ENCODE measurements at regions of chr6 and their contacts with region 1.

Region 1: DNA sequence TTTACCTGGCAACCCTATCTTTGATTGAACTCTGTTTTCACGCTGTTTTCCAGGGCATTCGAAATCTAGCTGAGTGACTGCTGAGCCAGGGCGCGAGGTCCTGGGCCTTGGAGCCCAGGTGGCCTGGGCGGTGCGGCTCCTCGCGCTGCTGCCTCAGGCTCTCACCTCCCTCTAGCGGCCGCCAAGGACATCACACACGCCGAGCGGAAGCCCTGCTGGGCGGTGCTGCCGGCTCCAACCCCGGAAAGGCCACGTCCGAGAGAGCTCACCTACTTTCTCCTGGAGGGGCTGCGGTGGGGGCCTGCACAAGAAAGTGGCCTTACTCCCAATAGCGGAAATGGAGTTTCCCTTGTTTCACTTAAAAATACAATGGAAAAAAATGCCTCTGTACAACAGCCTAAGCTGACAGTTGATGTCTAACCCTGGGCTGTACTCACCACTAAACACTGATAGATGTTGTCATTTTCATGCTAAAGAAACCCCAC is 77.7 kb downstream of the ELOVL4 start:
- DNase-seq: peak; percentile 57 to 79 (median 71)
- ATAC-seq: peak; percentile 98
- H3K4me3 ChIP-seq: no peak overlapping the region
- H3K4me3 Mint-ChIP-seq: peak overlapping the region; percentile 40 to 77 (median 68)
- H3K27ac ChIP-seq: no peak overlapping the region
- H3K27ac Mint-ChIP-seq: peak overlapping the region in 3 of 9 donors; percentile 53 to 56 (median 56)
- H3K4me1 ChIP-seq: no peaks in the 10 kb centered on the region
- H3K4me1 Mint-ChIP-seq: peaks cover 7 to 20% (median 10%) of the 10 kb centered on the region in 7 donors
- H3K27me3 ChIP-seq: no peaks in the 10 kb centered on the region
- H3K27me3 Mint-ChIP-seq: peaks cover 4 to 19% (median 4%) of the 10 kb centered on the region in 5 donors

Region 2: DNA sequence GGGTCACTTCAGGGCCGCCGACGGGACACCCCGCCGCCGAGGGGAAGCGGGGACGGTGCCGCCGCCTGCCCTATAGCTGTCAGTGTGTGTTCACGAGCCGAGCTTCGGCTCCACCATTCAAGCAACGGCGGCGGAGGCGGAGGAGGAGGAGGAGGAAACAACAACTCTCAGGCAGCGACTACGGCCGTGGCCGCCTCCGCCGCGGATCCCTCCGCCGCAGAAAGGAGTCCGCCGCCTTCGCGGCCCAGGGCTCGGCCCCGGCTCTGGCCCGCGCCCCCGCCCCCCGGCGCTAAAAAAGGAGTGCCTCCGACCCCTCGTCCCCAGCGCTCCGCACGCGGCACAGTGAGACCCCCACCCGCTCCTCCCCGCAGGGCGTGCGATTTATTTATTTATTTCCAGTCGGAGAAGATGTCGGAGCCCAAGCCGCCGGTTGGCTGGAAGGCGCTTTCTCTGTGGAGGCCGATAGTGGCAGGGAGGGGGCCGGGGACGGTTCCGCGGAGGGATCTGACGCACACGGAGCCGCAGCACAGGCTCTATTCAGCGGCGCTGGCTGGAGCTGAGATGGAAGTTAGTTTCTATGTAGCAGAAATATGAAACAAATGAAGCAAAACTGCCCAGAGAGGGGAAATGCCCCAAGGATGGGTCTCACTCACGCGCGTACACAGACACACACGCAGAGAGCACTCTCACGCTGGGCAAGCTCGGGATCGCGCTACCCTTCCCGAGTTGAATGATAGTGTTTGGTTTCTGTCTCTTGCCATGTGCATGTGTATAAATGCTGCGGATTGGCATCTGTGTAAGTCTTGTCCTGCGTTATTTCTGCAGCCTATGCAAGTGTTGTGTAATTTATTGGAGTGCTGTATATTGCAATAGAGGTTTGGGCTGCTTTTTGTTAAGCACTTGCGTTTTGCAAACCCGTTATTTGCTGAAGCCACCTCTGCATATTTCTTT is 791.3 kb before region 1 on chr6 and contains the start of gene PHIP:
- CTCF ChIA-PET with region 1: no interaction called
- POLR2A ChIA-PET with region 1: no interaction called
- intact Hi-C with region 1: loop called (anchors 1 to 5 kb)
- DNase-seq: peak; percentile 89 to 97 (median 94)
- ATAC-seq: peak; percentile 90
- H3K4me3 ChIP-seq: peak within 1 kb of the TSS; percentile 83
- H3K4me3 Mint-ChIP-seq: peak within 1 kb of the TSS; percentile 92 to 98 (median 94)
- H3K27ac ChIP-seq: peak within 1 kb of the TSS; percentile 98
- H3K27ac Mint-ChIP-seq: peak within 1 kb of the TSS; percentile 93 to 98 (median 95)
- H3K4me1 ChIP-seq: peaks cover 19 to 21% of the 10 kb centered on the region in 2 donors
- H3K4me1 Mint-ChIP-seq: peaks cover 19 to 46% (median 41%) of the 10 kb centered on the region in 7 donors
- H3K27me3 ChIP-seq: no peaks in the 10 kb centered on the region
- H3K27me3 Mint-ChIP-seq: peaks cover 4 to 23% (median 15%) of the 10 kb centered on the region in 5 donors
- total RNA-seq, gene PHIP: 34.0 to 46.8 (median 41.6) TPM

Region 3: DNA sequence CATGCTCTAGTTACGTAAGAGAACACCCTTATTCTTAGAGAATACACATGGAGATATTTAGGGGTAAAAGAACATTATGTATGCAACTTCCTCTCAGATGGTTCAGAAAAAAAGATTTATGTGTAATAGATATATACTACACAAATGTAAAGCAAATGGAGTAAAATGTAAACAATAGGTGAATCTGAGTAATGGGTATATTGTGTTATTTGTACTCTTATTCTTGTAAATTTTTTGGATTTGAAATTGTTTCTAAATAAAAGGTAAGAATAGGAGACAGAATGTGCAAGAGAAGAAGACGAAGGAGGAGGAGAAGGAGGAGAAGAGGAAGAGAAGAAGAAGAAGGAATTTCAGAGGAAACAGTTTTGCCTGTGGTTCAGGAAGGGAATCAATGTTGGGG is 309.9 kb before region 1 on chr6:
- CTCF ChIA-PET with region 1: no interaction called
- POLR2A ChIA-PET with region 1: no interaction called
- intact Hi-C with region 1: no loop called
- DNase-seq: no peak
- ATAC-seq: no peak
- H3K4me3 ChIP-seq: no peak overlapping the region
- H3K4me3 Mint-ChIP-seq: no peak overlapping the region
- H3K27ac ChIP-seq: no peak overlapping the region
- H3K27ac Mint-ChIP-seq: peak overlapping the region in 1 of 9 donors; percentile 6
- H3K4me1 ChIP-seq: no peaks in the 10 kb centered on the region
- H3K4me1 Mint-ChIP-seq: no peaks in the 10 kb centered on the region
- H3K27me3 ChIP-seq: no peaks in the 10 kb centered on the region
- H3K27me3 Mint-ChIP-seq: peaks cover 0 to 2% (median 0%) of the 10 kb centered on the region in 5 donors

Region 4: GRCh38 chr6:79570129-79571029 is 299.3 kb before region 1 on chr6:
- CTCF ChIA-PET with region 1: no interaction called
- POLR2A ChIA-PET with region 1: no interaction called
- intact Hi-C with region 1: loop called (anchors 1 to 2 kb)
- DNase-seq: peak in 6 of 9 donors; percentile 17 to 52 (median 44)
- ATAC-seq: peak; percentile 60
- H3K4me3 ChIP-seq: no peak overlapping the region
- H3K4me3 Mint-ChIP-seq: peak overlapping the region in 5 of 10 donors; percentile 2 to 61 (median 51)
- H3K27ac ChIP-seq: no peak overlapping the region
- H3K27ac Mint-ChIP-seq: no peak overlapping the region
- H3K4me1 ChIP-seq: no peaks in the 10 kb centered on the region
- H3K4me1 Mint-ChIP-seq: peaks cover 0 to 5% (median 0%) of the 10 kb centered on the region in 7 donors
- H3K27me3 ChIP-seq: no peaks in the 10 kb centered on the region
- H3K27me3 Mint-ChIP-seq: peaks cover 0 to 5% (median 0%) of the 10 kb centered on the region in 5 donors

Region 5: DNA sequence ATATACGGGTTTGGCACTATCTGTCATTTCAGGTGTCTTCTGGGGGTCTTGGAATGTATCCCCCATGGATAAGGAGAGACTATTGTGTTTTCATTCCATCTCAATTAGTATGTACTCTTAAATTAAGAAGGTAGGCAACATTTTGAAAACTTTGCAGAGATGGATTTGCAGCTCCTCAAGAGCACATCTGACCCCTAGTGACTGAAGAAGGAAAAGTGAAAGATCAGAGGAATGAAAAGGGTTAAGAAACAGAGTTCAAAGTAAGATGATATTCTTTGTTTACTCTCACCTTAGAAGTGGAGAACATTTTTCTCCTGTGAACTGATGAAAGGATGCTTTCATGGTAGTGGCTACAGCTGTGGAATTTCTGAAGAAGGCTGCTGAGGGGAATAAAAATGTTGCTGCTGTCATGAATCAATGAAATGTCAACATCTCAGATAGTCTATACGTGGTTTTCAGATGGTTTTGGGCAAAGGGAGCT is 197.0 kb before region 1 on chr6:
- CTCF ChIA-PET with region 1: no interaction called
- POLR2A ChIA-PET with region 1: no interaction called
- intact Hi-C with region 1: loop called in 1 of 2 experiments (anchors 5 kb)
- DNase-seq: peak in 5 of 9 donors; percentile 8 to 54 (median 45)
- ATAC-seq: peak; percentile 47
- H3K4me3 ChIP-seq: no peak overlapping the region
- H3K4me3 Mint-ChIP-seq: peak overlapping the region in 2 of 10 donors; percentile 60 to 65
- H3K27ac ChIP-seq: no peak overlapping the region
- H3K27ac Mint-ChIP-seq: peak overlapping the region in 7 of 9 donors; percentile 10 to 83 (median 56)
- H3K4me1 ChIP-seq: peaks cover 0 to 31% of the 10 kb centered on the region in 2 donors
- H3K4me1 Mint-ChIP-seq: peaks cover 16 to 53% (median 43%) of the 10 kb centered on the region in 7 donors
- H3K27me3 ChIP-seq: no peaks in the 10 kb centered on the region
- H3K27me3 Mint-ChIP-seq: no peaks in the 10 kb centered on the region

Region 6: GRCh38 chr6:79949233-79949632 is 79.6 kb after region 1 on chr6:
- CTCF ChIA-PET with region 1: no interaction called
- POLR2A ChIA-PET with region 1: no interaction called
- intact Hi-C with region 1: loop called (anchors 2 kb)
- DNase-seq: peak in 8 of 9 donors; percentile 36 to 61 (median 44)
- ATAC-seq: peak; percentile 65
- H3K4me3 ChIP-seq: no peak overlapping the region
- H3K4me3 Mint-ChIP-seq: peak overlapping the region in 5 of 10 donors; percentile 10 to 55 (median 16)
- H3K27ac ChIP-seq: no peak overlapping the region
- H3K27ac Mint-ChIP-seq: peak overlapping the region in 1 of 9 donors; percentile 56
- H3K4me1 ChIP-seq: peaks cover 4 to 16% of the 10 kb centered on the region in 2 donors
- H3K4me1 Mint-ChIP-seq: peaks cover 13 to 25% (median 19%) of the 10 kb centered on the region in 7 donors
- H3K27me3 ChIP-seq: no peaks in the 10 kb centered on the region
- H3K27me3 Mint-ChIP-seq: peaks cover 32 to 57% (median 43%) of the 10 kb centered on the region in 5 donors

Region 7: GRCh38 chr6:80094017-80094416 is 224.4 kb after region 1 on chr6:
- CTCF ChIA-PET with region 1: interaction called, 3 read pairs
- POLR2A ChIA-PET with region 1: no interaction called
- intact Hi-C with region 1: loop called (anchors 1 to 2 kb)
- DNase-seq: peak in 5 of 9 donors; percentile 31 to 36 (median 31)
- ATAC-seq: peak; percentile 67
- H3K4me3 ChIP-seq: no peak overlapping the region
- H3K4me3 Mint-ChIP-seq: no peak overlapping the region
- H3K27ac ChIP-seq: no peak overlapping the region
- H3K27ac Mint-ChIP-seq: no peak overlapping the region
- H3K4me1 ChIP-seq: no peaks in the 10 kb centered on the region
- H3K4me1 Mint-ChIP-seq: peaks cover 0 to 8% (median 7%) of the 10 kb centered on the region in 7 donors
- H3K27me3 ChIP-seq: no peaks in the 10 kb centered on the region
- H3K27me3 Mint-ChIP-seq: peaks cover 7 to 28% (median 12%) of the 10 kb centered on the region in 5 donors

Measured in naive thymus-derived CD4-positive, alpha-beta T cell (primary cell).